ENCODE measurements at regions of chr6 and their contacts with region 1.

Region 1: GRCh38 chr6:87407901-87408720 is at the start of gene CFAP206:
- DNase-seq: peak; percentile 77
- H3K4me3 ChIP-seq: peak within 1 kb of the TSS; percentile 79 to 96
- H3K27ac ChIP-seq: peak within 1 kb of the TSS; percentile 82 to 87
- H3K4me1 ChIP-seq: no peaks in the 10 kb centered on the region
- H3K27me3 ChIP-seq: no peaks in the 10 kb centered on the region
- CTCF ChIP-seq: peak in 1 of 4 experiments; percentile 14
- POLR2A ChIP-seq: no peak
- total RNA-seq, gene CFAP206: 8.7 to 10.5 TPM

Region 2: DNA sequence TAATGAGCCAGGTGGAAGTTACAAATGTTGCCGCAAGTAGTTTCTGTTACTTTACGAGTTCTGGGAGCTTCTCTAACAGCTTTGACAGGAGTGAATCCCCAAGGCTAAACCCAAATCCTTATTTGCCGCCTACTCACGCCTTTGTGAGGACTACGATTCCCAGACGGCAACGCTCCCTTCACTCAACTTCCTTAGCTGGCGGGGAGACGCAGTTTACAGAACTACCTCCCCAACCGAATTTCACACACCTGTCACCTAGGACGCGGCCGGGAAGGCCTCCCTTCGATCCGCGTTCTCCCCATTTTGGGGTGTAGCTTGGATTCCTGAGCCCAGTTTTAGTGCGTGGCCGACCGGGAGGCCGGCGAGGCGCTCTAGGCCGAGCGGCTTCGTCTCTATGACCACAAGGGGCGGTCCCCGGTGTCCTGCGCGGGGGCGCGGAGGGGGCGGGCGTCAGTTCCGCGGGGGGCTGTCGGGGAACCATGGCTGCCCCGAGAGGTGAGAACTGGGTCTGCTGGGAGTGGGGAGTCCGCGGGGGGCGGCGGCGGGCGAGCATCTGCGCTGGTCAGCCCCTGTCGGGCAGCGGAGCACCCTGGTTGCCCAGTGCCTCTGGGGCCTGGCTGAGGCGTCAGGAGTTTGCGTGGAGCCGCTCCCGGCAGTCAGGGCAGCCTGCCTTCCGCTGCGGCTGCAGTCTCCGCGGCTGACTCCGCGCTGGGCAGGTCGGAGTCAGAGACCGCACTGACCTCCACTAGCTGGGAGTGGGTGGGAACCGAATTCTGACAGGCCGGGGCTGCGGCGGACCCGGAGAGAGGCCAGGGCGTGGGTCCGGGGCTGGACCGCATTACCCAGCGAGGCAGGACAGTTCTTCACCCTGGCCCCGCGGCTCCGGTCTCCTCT is 64.7 kb after region 1 on chr6 and contains the start of gene SLC35A1:
- intact Hi-C with region 1: loop called (anchors 5 kb)
- DNase-seq: peak; percentile 82
- H3K4me3 ChIP-seq: peak within 1 kb of the TSS; percentile 86 to 88
- H3K27ac ChIP-seq: peak within 1 kb of the TSS; percentile 93 to 95
- H3K4me1 ChIP-seq: no peaks in the 10 kb centered on the region
- H3K27me3 ChIP-seq: no peaks in the 10 kb centered on the region
- CTCF ChIP-seq: peak; percentile 10 to 55 (median 32)
- POLR2A ChIP-seq: peak; percentile 78
- total RNA-seq, gene SLC35A1: 21.4 to 57.1 TPM

Measured in prostate gland (tissue), 2 donors.